Heart left ventricle (tissue), 16 donors: ENCODE measurements at regions of chr12 and their contacts with region 1.

Region 1: GRCh38 chr12:111953455-111953854 is 59.5 kb downstream of the TMEM116 start:
- DNase-seq: peak in 1 of 5 donors; percentile 14
- ATAC-seq: peak in 1 of 4 donors; percentile 24
- H3K4me3 ChIP-seq: no peak overlapping the region
- H3K27ac ChIP-seq: no peak overlapping the region
- H3K4me1 ChIP-seq: peaks cover 0 to 6% (median 0%) of the 10 kb centered on the region in 12 donors
- H3K27me3 ChIP-seq: no peaks in the 10 kb centered on the region
- CTCF ChIP-seq: no peak
- POLR2A ChIP-seq: no peak

Region 2: GRCh38 chr12:111993292-111994150 is 40.1 kb after region 1 on chr12:
- intact Hi-C with region 1: loop called in 1 of 10 experiments (anchors 5 kb)
- DNase-seq: no peak
- ATAC-seq: no peak
- H3K4me3 ChIP-seq: peak overlapping the region in 1 of 12 donors; percentile 44
- H3K27ac ChIP-seq: peak overlapping the region in 1 of 12 donors; percentile 73
- H3K4me1 ChIP-seq: peaks cover 0 to 51% (median 16%) of the 10 kb centered on the region in 12 donors
- H3K27me3 ChIP-seq: no peaks in the 10 kb centered on the region
- CTCF ChIP-seq: no peak
- POLR2A ChIP-seq: no peak